IMR-90 (cell line): ENCODE measurements at regions of chr1 and their contacts with region 1.

Region 1: GRCh38 chr1:24027838-24028468 is 47.8 kb upstream of the SRSF10 start:
- DNase-seq: peak; percentile 73
- ATAC-seq: peak; percentile 90
- H3K4me3 ChIP-seq: no peak overlapping the region
- H3K27ac ChIP-seq: no peak overlapping the region
- H3K4me1 ChIP-seq: no peaks in the 10 kb centered on the region; the same call in 1 of the 2 replicates
- H3K27me3 ChIP-seq: no peaks in the 10 kb centered on the region
- CTCF ChIP-seq: peak; percentile 70
- POLR2A ChIP-seq: no peak
- RAD21 ChIP-seq: peak; percentile 73

Region 2: DNA sequence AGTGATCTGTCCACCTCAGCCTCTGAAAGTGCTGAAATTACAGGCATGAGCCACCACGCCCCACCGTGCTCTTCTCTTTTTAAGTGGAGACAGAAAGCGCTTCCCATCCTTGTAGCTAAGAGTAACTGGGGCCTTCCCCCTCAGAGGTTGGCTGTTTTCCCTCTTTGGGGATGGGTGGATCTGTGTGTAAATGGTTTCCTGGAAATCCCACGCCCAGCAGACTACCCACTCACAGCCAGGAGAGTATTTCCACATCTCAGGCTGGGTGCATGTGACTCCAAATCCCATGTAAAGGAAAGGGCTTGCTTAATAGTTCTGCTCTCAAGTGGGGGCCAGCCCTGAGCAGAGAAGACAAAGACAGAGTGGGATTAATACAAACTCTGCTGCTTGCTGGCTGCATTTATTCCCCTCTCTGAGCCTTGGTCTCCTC is 583.8 kb before region 1 on chr1:
- CTCF ChIA-PET with region 1: no interaction called
- POLR2A ChIA-PET with region 1: no interaction called
- dilution Hi-C with region 1: no loop called
- in situ Hi-C with region 1: no loop called
- intact Hi-C with region 1: no loop called
- DNase-seq: peak; percentile 72
- ATAC-seq: peak; percentile 64
- H3K4me3 ChIP-seq: no peak overlapping the region
- H3K27ac ChIP-seq: peak overlapping the region; percentile 68; the same call in 1 of the 2 replicates
- H3K4me1 ChIP-seq: peaks cover 2% of the 10 kb centered on the region; the same call in 1 of the 2 replicates
- H3K27me3 ChIP-seq: no peaks in the 10 kb centered on the region
- CTCF ChIP-seq: no peak
- POLR2A ChIP-seq: no peak
- RAD21 ChIP-seq: no peak

Region 3: DNA sequence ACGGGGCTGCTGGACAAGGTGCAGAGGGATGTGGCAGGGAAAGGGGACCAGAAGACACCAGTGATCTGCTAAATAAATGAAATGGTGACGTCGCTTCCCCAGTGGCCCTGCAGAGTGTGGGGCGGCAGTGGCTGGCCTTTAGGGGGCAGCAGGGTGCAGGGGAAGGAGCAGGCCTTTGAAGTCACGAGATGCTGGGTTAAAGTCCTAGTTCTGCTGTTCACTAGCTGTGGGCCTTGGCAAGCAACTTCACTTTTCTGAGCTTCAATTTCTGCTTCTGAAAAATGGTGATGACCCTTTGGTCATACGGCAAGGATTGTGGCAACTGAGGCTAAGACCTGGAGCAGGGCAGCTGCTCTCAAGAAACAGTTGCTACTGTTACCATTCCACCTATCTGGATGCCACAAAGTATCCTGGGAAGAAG is 218.2 kb before region 1 on chr1:
- CTCF ChIA-PET with region 1: no interaction called
- POLR2A ChIA-PET with region 1: no interaction called
- dilution Hi-C with region 1: no loop called
- in situ Hi-C with region 1: no loop called
- intact Hi-C with region 1: loop called (anchors 5 kb)
- DNase-seq: peak; percentile 51
- ATAC-seq: peak; percentile 91
- H3K4me3 ChIP-seq: no peak overlapping the region
- H3K27ac ChIP-seq: no peak overlapping the region
- H3K4me1 ChIP-seq: no peaks in the 10 kb centered on the region
- H3K27me3 ChIP-seq: no peaks in the 10 kb centered on the region
- CTCF ChIP-seq: peak; percentile 75
- POLR2A ChIP-seq: no peak
- RAD21 ChIP-seq: peak; percentile 74

Region 4: GRCh38 chr1:23959461-23960290 is 68.3 kb before region 1 on chr1 and contains the start of gene PNRC2:
- CTCF ChIA-PET with region 1: no interaction called
- POLR2A ChIA-PET with region 1: interaction called, 3 read pairs
- dilution Hi-C with region 1: no loop called
- in situ Hi-C with region 1: no loop called
- intact Hi-C with region 1: loop called (anchors 5 kb)
- DNase-seq: peak; percentile 94
- ATAC-seq: peak; percentile 93
- H3K4me3 ChIP-seq: peak within 1 kb of the TSS; percentile 83
- H3K27ac ChIP-seq: peak within 1 kb of the TSS; percentile 99
- H3K4me1 ChIP-seq: peaks cover 2% of the 10 kb centered on the region; the same call in 1 of the 2 replicates
- H3K27me3 ChIP-seq: no peaks in the 10 kb centered on the region
- CTCF ChIP-seq: no peak
- POLR2A ChIP-seq: peak; percentile 97
- RAD21 ChIP-seq: no peak
- total RNA-seq, gene PNRC2: 76.0 and 106 TPM in 2 replicates

Region 5: GRCh38 chr1:23979878-23980724 is 47.9 kb before region 1 on chr1 and contains the start of gene SRSF10:
- CTCF ChIA-PET with region 1: no interaction called
- POLR2A ChIA-PET with region 1: no interaction called
- dilution Hi-C with region 1: no loop called
- in situ Hi-C with region 1: loop called (anchors 5 kb)
- intact Hi-C with region 1: loop called (anchors 1 kb)
- DNase-seq: peak; percentile 99
- ATAC-seq: peak; percentile 99
- H3K4me3 ChIP-seq: peak within 1 kb of the TSS; percentile 86
- H3K27ac ChIP-seq: peak within 1 kb of the TSS; percentile 98
- H3K4me1 ChIP-seq: peaks cover 7% of the 10 kb centered on the region
- H3K27me3 ChIP-seq: no peaks in the 10 kb centered on the region
- CTCF ChIP-seq: peak; percentile 46
- POLR2A ChIP-seq: peak; percentile 98
- RAD21 ChIP-seq: 0 out of 2 replicates have a peak, but pooled peaks have one; percentile 15
- total RNA-seq, gene SRSF10: 110 and 189 TPM in 2 replicates

Region 6: DNA sequence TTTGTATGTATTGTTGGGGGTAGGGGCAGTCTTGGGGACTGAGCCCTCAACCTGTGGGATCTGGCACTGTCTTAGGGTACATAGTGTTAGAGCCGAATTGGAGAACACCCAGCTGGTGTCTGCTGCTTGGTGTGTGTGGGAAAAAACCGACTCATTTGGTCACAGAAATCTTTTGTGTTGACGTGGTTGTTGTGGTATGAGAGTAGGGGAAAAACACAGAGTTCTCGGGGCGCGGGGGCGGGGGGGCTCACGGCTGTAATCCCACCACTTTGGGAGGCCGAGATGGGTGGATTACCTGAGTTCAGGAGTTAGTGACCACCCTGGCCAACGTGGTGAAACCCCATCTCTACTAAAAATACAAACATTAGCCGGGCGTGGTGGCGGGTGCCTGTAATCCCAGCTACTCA is 32.5 kb before region 1 on chr1:
- CTCF ChIA-PET with region 1: no interaction called
- POLR2A ChIA-PET with region 1: no interaction called
- dilution Hi-C with region 1: no loop called
- in situ Hi-C with region 1: no loop called
- intact Hi-C with region 1: no loop called
- DNase-seq: peak; percentile 68
- ATAC-seq: peak; percentile 29; the same call in 1 of the 2 replicates
- H3K4me3 ChIP-seq: no peak overlapping the region
- H3K27ac ChIP-seq: no peak overlapping the region
- H3K4me1 ChIP-seq: 0 out of 2 replicates have a peak, but pooled peaks cover 2% of the 10 kb centered on the region
- H3K27me3 ChIP-seq: no peaks in the 10 kb centered on the region
- CTCF ChIP-seq: no peak
- POLR2A ChIP-seq: no peak
- RAD21 ChIP-seq: no peak